CD4-positive, alpha-beta memory T cell (primary cell): ENCODE measurements at regions of chr22 and their contacts with region 1.

Region 1: GRCh38 chr22:22959147-22959827 is 71.7 kb downstream of the IGLL5 start:
- DNase-seq: peak; percentile 59 to 76 (median 68)
- H3K4me3 ChIP-seq: no peak overlapping the region
- H3K4me3 Mint-ChIP-seq: no peak overlapping the region
- H3K27ac ChIP-seq: no peak overlapping the region
- H3K27ac Mint-ChIP-seq: peak overlapping the region in 1 of 7 donors; percentile 29
- H3K4me1 ChIP-seq: no peaks in the 10 kb centered on the region
- H3K4me1 Mint-ChIP-seq: peaks cover 0 to 4% (median 2%) of the 10 kb centered on the region in 4 donors
- H3K27me3 ChIP-seq: no peaks in the 10 kb centered on the region
- H3K27me3 Mint-ChIP-seq: peaks cover 11 to 18% of the 10 kb centered on the region in 2 donors

Region 2: DNA sequence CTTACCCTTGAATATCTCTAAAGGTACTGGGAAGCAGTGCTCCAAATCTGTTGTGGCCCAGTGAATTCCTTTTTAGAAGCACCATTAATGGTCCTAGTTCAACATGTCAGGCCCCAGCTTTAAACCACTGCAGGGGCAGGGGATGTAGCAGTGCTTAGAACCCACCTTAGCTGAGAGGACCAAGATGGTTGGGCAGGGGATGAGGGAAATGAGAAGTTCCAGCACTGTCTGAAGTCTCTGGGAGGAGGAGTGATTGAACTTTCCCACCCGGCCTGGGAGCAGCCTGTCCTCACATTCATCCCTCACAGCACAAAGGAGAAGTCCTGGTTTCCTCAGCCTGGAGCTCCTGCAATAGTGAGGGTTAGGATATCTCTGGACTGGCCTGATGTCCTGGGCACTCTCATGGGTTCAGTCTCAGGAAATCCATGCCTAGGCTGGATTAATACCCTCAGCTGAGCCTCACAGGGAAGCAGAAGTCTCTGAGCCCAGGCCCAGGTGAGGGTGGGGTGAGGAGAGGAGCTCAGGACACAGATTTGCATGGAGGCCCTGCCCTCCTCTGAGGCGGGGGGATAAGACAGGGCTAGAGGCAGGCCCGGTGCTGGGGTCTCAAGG is 371.6 kb before region 1 on chr22:
- CTCF ChIA-PET with region 1: interaction called, 34 read pairs
- POLR2A ChIA-PET with region 1: no interaction called
- intact Hi-C with region 1: loop called (anchors 2 kb)
- DNase-seq: no peak
- H3K4me3 ChIP-seq: no peak overlapping the region
- H3K4me3 Mint-ChIP-seq: no peak overlapping the region
- H3K27ac ChIP-seq: no peak overlapping the region
- H3K27ac Mint-ChIP-seq: no peak overlapping the region
- H3K4me1 ChIP-seq: no peaks in the 10 kb centered on the region
- H3K4me1 Mint-ChIP-seq: no peaks in the 10 kb centered on the region
- H3K27me3 ChIP-seq: no peaks in the 10 kb centered on the region
- H3K27me3 Mint-ChIP-seq: peaks cover 14 to 16% of the 10 kb centered on the region in 2 donors

Region 3: GRCh38 chr22:22692707-22693530 is 266.4 kb before region 1 on chr22:
- CTCF ChIA-PET with region 1: interaction called, 18 read pairs
- POLR2A ChIA-PET with region 1: no interaction called
- intact Hi-C with region 1: no loop called
- DNase-seq: peak; percentile 52 to 61 (median 54)
- H3K4me3 ChIP-seq: no peak overlapping the region
- H3K4me3 Mint-ChIP-seq: no peak overlapping the region
- H3K27ac ChIP-seq: no peak overlapping the region
- H3K27ac Mint-ChIP-seq: peak overlapping the region in 2 of 7 donors; percentile 27 to 29
- H3K4me1 ChIP-seq: no peaks in the 10 kb centered on the region
- H3K4me1 Mint-ChIP-seq: peaks cover 0 to 5% (median 0%) of the 10 kb centered on the region in 4 donors
- H3K27me3 ChIP-seq: no peaks in the 10 kb centered on the region
- H3K27me3 Mint-ChIP-seq: no peaks in the 10 kb centered on the region

Region 4: GRCh38 chr22:22748297-22748743 is 211.0 kb before region 1 on chr22:
- CTCF ChIA-PET with region 1: interaction called, 28 read pairs
- POLR2A ChIA-PET with region 1: no interaction called
- intact Hi-C with region 1: loop called (anchors 1 kb)
- DNase-seq: peak in 4 of 5 donors; percentile 19 to 33 (median 24)
- H3K4me3 ChIP-seq: no peak overlapping the region
- H3K4me3 Mint-ChIP-seq: no peak overlapping the region
- H3K27ac ChIP-seq: no peak overlapping the region
- H3K27ac Mint-ChIP-seq: peak overlapping the region in 3 of 7 donors; percentile 17 to 74 (median 64)
- H3K4me1 ChIP-seq: peaks cover 11% of the 10 kb centered on the region
- H3K4me1 Mint-ChIP-seq: peaks cover 10 to 31% (median 24%) of the 10 kb centered on the region in 4 donors
- H3K27me3 ChIP-seq: no peaks in the 10 kb centered on the region
- H3K27me3 Mint-ChIP-seq: peaks cover 0 to 4% of the 10 kb centered on the region in 2 donors

Region 5: GRCh38 chr22:22802339-22802970 is 156.8 kb before region 1 on chr22:
- CTCF ChIA-PET with region 1: interaction called, 4 read pairs
- POLR2A ChIA-PET with region 1: no interaction called
- intact Hi-C with region 1: loop called (anchors 5 kb)
- DNase-seq: peak in 2 of 5 donors; percentile 24 to 38
- H3K4me3 ChIP-seq: no peak overlapping the region
- H3K4me3 Mint-ChIP-seq: peak overlapping the region in 1 of 8 donors; percentile 31
- H3K27ac ChIP-seq: no peak overlapping the region
- H3K27ac Mint-ChIP-seq: peak overlapping the region in 1 of 7 donors; percentile 50
- H3K4me1 ChIP-seq: no peaks in the 10 kb centered on the region
- H3K4me1 Mint-ChIP-seq: peaks cover 12 to 40% (median 28%) of the 10 kb centered on the region in 4 donors
- H3K27me3 ChIP-seq: no peaks in the 10 kb centered on the region
- H3K27me3 Mint-ChIP-seq: no peaks in the 10 kb centered on the region

Region 6: DNA sequence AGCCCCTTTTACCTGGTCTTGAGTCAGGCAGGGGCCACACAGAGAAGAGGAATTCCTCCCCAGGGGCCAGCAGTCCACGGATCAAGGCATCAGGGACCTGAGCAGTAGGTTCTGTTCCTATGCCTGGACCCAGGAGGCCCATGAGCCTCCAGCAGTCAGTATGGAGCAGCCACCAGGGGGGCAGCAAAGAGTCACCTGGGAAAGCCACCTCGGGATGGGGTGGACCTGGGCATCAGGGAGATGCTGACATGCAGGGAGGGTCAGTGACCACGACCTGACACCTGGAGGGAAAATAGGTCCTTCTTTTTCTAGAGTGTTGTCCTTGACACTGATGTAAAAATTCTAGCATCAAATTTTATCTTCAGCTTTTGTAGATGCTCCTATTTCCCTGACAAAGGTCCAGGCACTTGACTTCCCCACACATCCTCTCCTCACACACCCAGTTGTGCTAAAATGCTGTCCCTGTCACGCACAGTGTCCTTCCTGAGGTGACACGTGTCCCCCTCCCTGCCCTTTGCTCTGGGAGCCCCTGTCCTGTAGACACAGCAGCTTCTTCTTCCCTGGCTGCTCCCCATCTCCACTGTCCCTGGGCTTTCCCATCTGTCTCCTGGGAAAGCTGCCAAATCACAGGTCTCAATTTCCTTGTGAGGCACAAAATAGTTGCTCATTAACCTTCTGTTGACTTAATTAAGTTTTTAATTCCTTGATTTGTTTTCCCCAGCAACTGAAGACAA is 141.7 kb before region 1 on chr22:
- CTCF ChIA-PET with region 1: no interaction called
- POLR2A ChIA-PET with region 1: no interaction called
- intact Hi-C with region 1: no loop called
- DNase-seq: no peak
- H3K4me3 ChIP-seq: no peak overlapping the region
- H3K4me3 Mint-ChIP-seq: peak overlapping the region in 7 of 8 donors; percentile 76 to 91 (median 81)
- H3K27ac ChIP-seq: no peak overlapping the region
- H3K27ac Mint-ChIP-seq: peak overlapping the region; percentile 88 to 97 (median 96)
- H3K4me1 ChIP-seq: peaks cover 86% of the 10 kb centered on the region
- H3K4me1 Mint-ChIP-seq: peaks cover 79 to 98% (median 90%) of the 10 kb centered on the region in 4 donors
- H3K27me3 ChIP-seq: no peaks in the 10 kb centered on the region
- H3K27me3 Mint-ChIP-seq: no peaks in the 10 kb centered on the region

Region 7: GRCh38 chr22:23119494-23120414 is 160.5 kb after region 1 on chr22:
- CTCF ChIA-PET with region 1: interaction called, 42 read pairs
- POLR2A ChIA-PET with region 1: no interaction called
- intact Hi-C with region 1: no loop called
- DNase-seq: peak; percentile 66 to 81 (median 71)
- H3K4me3 ChIP-seq: no peak overlapping the region
- H3K4me3 Mint-ChIP-seq: peak overlapping the region; percentile 58 to 86 (median 67)
- H3K27ac ChIP-seq: peak overlapping the region; percentile 51
- H3K27ac Mint-ChIP-seq: peak overlapping the region; percentile 89 to 99 (median 98)
- H3K4me1 ChIP-seq: peaks cover 16% of the 10 kb centered on the region
- H3K4me1 Mint-ChIP-seq: peaks cover 8 to 24% (median 16%) of the 10 kb centered on the region in 4 donors
- H3K27me3 ChIP-seq: no peaks in the 10 kb centered on the region
- H3K27me3 Mint-ChIP-seq: no peaks in the 10 kb centered on the region

Region 8: GRCh38 chr22:23178512-23179254 is 219.4 kb after region 1 on chr22:
- CTCF ChIA-PET with region 1: interaction called, 12 read pairs
- POLR2A ChIA-PET with region 1: no interaction called
- intact Hi-C with region 1: no loop called
- DNase-seq: peak in 4 of 5 donors; percentile 57
- H3K4me3 ChIP-seq: no peak overlapping the region
- H3K4me3 Mint-ChIP-seq: peak overlapping the region; percentile 63 to 84 (median 82)
- H3K27ac ChIP-seq: peak overlapping the region; percentile 27
- H3K27ac Mint-ChIP-seq: peak overlapping the region; percentile 88 to 95 (median 90)
- H3K4me1 ChIP-seq: peaks cover 70% of the 10 kb centered on the region
- H3K4me1 Mint-ChIP-seq: peaks cover 39 to 60% (median 52%) of the 10 kb centered on the region in 4 donors
- H3K27me3 ChIP-seq: no peaks in the 10 kb centered on the region
- H3K27me3 Mint-ChIP-seq: no peaks in the 10 kb centered on the region